ENCODE measurements at regions of chr6 and their contacts with region 1.

Region 1: DNA sequence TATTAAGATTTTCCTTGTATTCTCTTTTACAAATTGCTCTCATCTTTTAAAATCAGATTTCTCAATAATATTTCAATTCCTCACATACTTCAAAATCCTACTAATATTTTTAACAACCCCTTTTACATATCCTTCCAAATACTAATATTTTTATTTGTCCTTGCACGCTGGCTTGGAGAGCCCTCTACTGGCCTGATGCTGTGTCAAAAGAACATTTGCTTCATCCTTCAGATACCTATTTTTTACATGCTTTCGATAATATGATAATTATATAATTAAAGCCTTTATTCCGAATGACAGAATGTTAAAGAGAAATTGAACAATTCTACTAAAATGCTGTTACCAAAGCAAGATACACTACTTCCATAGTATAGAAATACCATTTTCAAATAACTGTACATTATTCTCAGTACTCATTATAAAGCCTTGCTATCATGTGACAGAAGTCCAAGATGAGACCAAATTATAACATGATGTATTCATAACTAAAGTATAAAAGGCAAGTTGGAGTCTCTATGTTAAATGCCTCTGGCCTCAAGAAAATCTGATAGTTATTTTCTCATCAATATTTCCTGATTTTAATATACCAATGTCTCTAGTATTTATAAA is 39.0 kb upstream of the PLN start:
- DNase-seq: peak; percentile 39
- ATAC-seq: no peak
- H3K4me3 Mint-ChIP-seq: no peak overlapping the region
- H3K27ac Mint-ChIP-seq: no peak overlapping the region
- H3K4me1 Mint-ChIP-seq: peaks cover 12% of the 10 kb centered on the region
- H3K27me3 Mint-ChIP-seq: no peaks in the 10 kb centered on the region

Region 2: DNA sequence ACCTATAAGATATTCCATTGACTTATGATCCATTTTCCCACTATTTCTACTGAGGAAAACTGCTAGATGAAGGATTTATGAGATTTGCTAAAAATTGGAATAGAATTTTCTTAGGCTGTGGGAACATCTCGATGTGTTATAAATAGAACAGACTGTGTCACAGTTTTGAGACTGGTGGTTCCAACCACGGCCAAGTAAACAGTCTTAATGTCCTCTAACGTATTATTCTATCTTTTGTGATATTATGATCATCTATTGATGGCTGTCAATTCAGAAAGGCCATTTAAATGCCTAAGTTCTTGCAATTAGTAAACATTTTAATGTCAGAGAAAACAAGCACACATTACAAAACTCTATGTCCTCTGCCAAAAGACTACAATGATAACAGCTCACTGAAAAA is 32.6 kb before region 1 on chr6:
- CTCF ChIA-PET with region 1: no interaction called
- POLR2A ChIA-PET with region 1: no interaction called
- intact Hi-C with region 1: loop called in 1 of 2 experiments (anchors 1 kb)
- DNase-seq: no peak
- ATAC-seq: no peak
- H3K4me3 Mint-ChIP-seq: no peak overlapping the region
- H3K27ac Mint-ChIP-seq: no peak overlapping the region
- H3K4me1 Mint-ChIP-seq: no peaks in the 10 kb centered on the region
- H3K27me3 Mint-ChIP-seq: no peaks in the 10 kb centered on the region